CD4-positive, alpha-beta T cell (primary cell): ENCODE measurements at regions of chr6 and their contacts with region 1.

Region 1: GRCh38 chr6:31665501-31666336 is at the start of gene CSNK2B:
- DNase-seq: peak; percentile 94 to 99 (median 97)
- ATAC-seq: peak; percentile 85
- H3K4me3 ChIP-seq: peak within 1 kb of the TSS; percentile 79
- H3K4me3 Mint-ChIP-seq: peak within 1 kb of the TSS; percentile 95
- H3K27ac ChIP-seq: peak within 1 kb of the TSS; percentile 93 to 96
- H3K27ac Mint-ChIP-seq: peak within 1 kb of the TSS; percentile 97
- H3K4me1 ChIP-seq: peaks cover 61% of the 10 kb centered on the region
- H3K4me1 Mint-ChIP-seq: peaks cover 51% of the 10 kb centered on the region
- H3K27me3 ChIP-seq: no peaks in the 10 kb centered on the region
- H3K27me3 Mint-ChIP-seq: no peaks in the 10 kb centered on the region
- CTCF ChIP-seq: no peak
- total RNA-seq, gene CSNK2B: 88.0 to 92.6 TPM

Region 2: GRCh38 chr6:30571075-30571768 is 1094.5 kb before region 1 on chr6 and contains the start of gene ABCF1:
- CTCF ChIA-PET with region 1: no interaction called
- POLR2A ChIA-PET with region 1: no interaction called
- intact Hi-C with region 1: loop called in 1 of 2 experiments (anchors 5 kb)
- DNase-seq: peak; percentile 97 to 100 (median 99)
- ATAC-seq: peak; percentile 90
- H3K4me3 ChIP-seq: peak within 1 kb of the TSS; percentile 82
- H3K4me3 Mint-ChIP-seq: peak within 1 kb of the TSS; percentile 100
- H3K27ac ChIP-seq: peak within 1 kb of the TSS; percentile 94 to 98
- H3K27ac Mint-ChIP-seq: peak within 1 kb of the TSS; percentile 98
- H3K4me1 ChIP-seq: peaks cover 47% of the 10 kb centered on the region
- H3K4me1 Mint-ChIP-seq: peaks cover 56% of the 10 kb centered on the region
- H3K27me3 ChIP-seq: no peaks in the 10 kb centered on the region
- H3K27me3 Mint-ChIP-seq: no peaks in the 10 kb centered on the region
- CTCF ChIP-seq: no peak
- total RNA-seq, gene ABCF1: 86.1 to 88.0 TPM

Region 3: GRCh38 chr6:31619805-31620585 is 45.7 kb before region 1 on chr6:
- CTCF ChIA-PET with region 1: no interaction called
- POLR2A ChIA-PET with region 1: interaction called, 23 read pairs
- intact Hi-C with region 1: loop called (anchors 1 to 2 kb)
- DNase-seq: peak; percentile 86 to 99 (median 95)
- ATAC-seq: peak; percentile 79
- H3K4me3 ChIP-seq: peak overlapping the region; percentile 74
- H3K4me3 Mint-ChIP-seq: peak overlapping the region; percentile 92
- H3K27ac ChIP-seq: peak overlapping the region; percentile 97 to 99
- H3K27ac Mint-ChIP-seq: peak overlapping the region; percentile 92
- H3K4me1 ChIP-seq: peaks cover 46% of the 10 kb centered on the region
- H3K4me1 Mint-ChIP-seq: peaks cover 52% of the 10 kb centered on the region
- H3K27me3 ChIP-seq: no peaks in the 10 kb centered on the region
- H3K27me3 Mint-ChIP-seq: no peaks in the 10 kb centered on the region
- CTCF ChIP-seq: no peak

Region 4: DNA sequence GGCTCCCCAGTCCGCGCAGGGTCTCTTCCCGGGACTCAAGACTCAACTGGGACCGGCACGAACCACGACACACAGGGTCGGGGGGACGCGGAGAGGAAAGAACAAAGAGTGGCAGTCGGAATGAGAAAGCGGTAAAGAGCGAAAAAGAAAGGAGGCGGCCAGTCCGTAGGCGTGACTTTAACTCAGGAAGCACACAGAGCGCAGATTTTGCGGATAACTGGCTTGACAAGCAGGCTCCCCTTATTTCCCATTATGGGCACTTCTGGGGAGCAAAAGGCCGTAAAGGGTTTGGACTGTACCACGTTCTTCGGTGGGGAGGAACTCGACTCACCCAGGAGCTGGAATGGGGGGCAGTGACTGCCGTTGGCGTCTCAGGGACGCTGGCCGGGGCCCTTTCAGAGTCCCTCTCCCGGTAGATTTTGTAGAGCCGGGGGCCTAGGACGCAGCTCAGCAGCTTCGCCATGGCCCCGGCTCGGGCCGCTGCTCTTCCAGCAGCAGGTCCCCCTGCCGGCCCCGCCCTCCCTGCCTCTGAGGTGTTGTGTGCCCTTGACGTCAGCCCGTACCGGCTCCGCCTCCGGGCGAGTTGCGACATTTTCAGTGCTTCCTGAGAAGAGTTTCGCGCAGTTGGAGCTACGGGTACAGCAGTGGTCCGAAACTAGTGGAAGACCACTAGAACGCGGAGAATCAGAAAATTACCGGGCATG is 37.3 kb after region 1 on chr6 and contains the start of gene ABHD16A:
- CTCF ChIA-PET with region 1: no interaction called
- POLR2A ChIA-PET with region 1: interaction called, 18 read pairs
- intact Hi-C with region 1: loop called (anchors 1 to 2 kb)
- DNase-seq: peak; percentile 94 to 99 (median 97)
- ATAC-seq: peak; percentile 91
- H3K4me3 ChIP-seq: peak within 1 kb of the TSS; percentile 67
- H3K4me3 Mint-ChIP-seq: peak within 1 kb of the TSS; percentile 94
- H3K27ac ChIP-seq: peak within 1 kb of the TSS; percentile 95 to 98
- H3K27ac Mint-ChIP-seq: peak within 1 kb of the TSS; percentile 94
- H3K4me1 ChIP-seq: peaks cover 35% of the 10 kb centered on the region
- H3K4me1 Mint-ChIP-seq: peaks cover 33% of the 10 kb centered on the region
- H3K27me3 ChIP-seq: no peaks in the 10 kb centered on the region
- H3K27me3 Mint-ChIP-seq: no peaks in the 10 kb centered on the region
- CTCF ChIP-seq: no peak
- total RNA-seq, gene ABHD16A: 52.3 to 59.3 TPM

Region 5: DNA sequence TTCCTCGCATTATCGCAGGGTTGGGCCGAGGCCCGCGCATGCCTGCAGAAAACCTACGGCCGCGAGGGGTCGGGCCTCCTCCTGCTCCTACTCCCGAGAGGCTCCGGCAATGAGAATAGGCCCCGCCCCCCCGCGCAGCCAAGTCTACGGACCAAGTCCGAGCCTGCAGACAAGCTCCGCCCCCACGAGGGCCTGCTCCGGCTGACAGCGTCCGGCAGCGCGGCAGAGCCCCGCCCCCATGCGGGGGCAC is 529.9 kb after region 1 on chr6:
- CTCF ChIA-PET with region 1: no interaction called
- POLR2A ChIA-PET with region 1: interaction called, 3 read pairs
- intact Hi-C with region 1: loop called in 1 of 2 experiments (anchors 10 kb)
- DNase-seq: peak in 13 of 14 experiments; percentile 97 to 100 (median 100)
- ATAC-seq: peak; percentile 82
- H3K4me3 ChIP-seq: peak overlapping the region; percentile 100
- H3K4me3 Mint-ChIP-seq: peak overlapping the region; percentile 99
- H3K27ac ChIP-seq: peak overlapping the region; percentile 87 to 100
- H3K27ac Mint-ChIP-seq: peak overlapping the region; percentile 96
- H3K4me1 ChIP-seq: peaks cover 52% of the 10 kb centered on the region
- H3K4me1 Mint-ChIP-seq: peaks cover 48% of the 10 kb centered on the region
- H3K27me3 ChIP-seq: no peaks in the 10 kb centered on the region
- H3K27me3 Mint-ChIP-seq: no peaks in the 10 kb centered on the region
- CTCF ChIP-seq: peak; percentile 31